ENCODE measurements at regions of chr19 and their contacts with region 1.

Region 1: GRCh38 chr19:46600384-46601317 is 479 bp upstream of the CALM3 start:
- DNase-seq: peak; percentile 96
- H3K4me3 ChIP-seq: peak overlapping the region; percentile 98 to 100
- H3K27ac ChIP-seq: peak overlapping the region; percentile 94 to 100
- H3K4me1 ChIP-seq: peaks cover 19 to 31% of the 10 kb centered on the region in 2 experiments
- H3K27me3 ChIP-seq: no peaks in the 10 kb centered on the region
- CTCF ChIP-seq: no peak
- EP300 ChIP-seq: peak in 1 of 2 experiments; percentile 65; a peak in 1 of 4 replicates
- RAD21 ChIP-seq: no peak

Region 2: DNA sequence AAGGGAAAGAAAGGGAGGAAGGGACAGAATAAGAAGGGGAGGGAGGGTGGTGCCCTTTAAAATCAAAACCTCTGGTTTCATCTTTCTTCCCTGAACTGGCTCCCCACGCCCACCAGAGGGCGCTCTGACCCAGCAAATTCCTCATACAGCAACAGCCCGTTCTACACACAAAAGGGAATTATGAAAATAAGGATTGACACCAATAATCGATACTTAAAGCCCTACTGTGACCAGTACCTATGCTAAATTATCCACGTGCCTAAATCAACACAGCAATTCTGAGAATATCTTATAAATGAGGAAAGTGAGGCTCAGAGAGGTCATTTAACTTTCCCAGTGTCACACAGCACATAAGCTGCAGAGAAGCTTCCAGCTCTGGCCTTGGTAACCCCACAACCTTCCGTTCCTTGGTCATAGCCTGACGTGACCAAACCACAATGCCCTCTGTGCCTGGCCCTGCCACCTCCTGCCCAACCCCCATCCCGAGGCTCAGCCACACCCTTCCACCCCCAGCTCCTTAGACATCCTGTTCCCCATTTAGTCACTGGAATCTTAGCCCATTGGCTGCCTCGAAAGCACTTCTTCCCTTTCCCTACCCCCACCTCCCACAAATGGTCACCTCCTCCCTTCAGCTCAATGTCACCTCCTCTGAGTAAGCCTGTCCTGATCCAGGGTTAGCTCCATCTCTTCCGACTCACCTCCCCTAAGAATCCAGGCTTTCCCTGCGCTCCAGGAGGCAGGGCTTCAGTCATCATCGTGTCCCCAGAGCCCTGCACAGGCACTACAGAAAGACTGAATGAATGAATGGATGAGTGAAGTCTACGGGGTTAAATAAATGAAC is 70.8 kb before region 1 on chr19:
- CTCF ChIA-PET with region 1: interaction called, 14 read pairs
- POLR2A ChIA-PET with region 1: interaction called, 3 read pairs
- DNase-seq: peak; percentile 81
- H3K4me3 ChIP-seq: peak overlapping the region in 1 of 2 experiments; percentile 35; a peak in 1 of 4 replicates
- H3K27ac ChIP-seq: no peak overlapping the region
- H3K4me1 ChIP-seq: peaks cover 0 to 28% of the 10 kb centered on the region in 2 experiments; a peak in 1 of 4 replicates
- H3K27me3 ChIP-seq: no peaks in the 10 kb centered on the region
- CTCF ChIP-seq: peak; percentile 88
- EP300 ChIP-seq: no peak
- RAD21 ChIP-seq: peak; percentile 95

Region 3: DNA sequence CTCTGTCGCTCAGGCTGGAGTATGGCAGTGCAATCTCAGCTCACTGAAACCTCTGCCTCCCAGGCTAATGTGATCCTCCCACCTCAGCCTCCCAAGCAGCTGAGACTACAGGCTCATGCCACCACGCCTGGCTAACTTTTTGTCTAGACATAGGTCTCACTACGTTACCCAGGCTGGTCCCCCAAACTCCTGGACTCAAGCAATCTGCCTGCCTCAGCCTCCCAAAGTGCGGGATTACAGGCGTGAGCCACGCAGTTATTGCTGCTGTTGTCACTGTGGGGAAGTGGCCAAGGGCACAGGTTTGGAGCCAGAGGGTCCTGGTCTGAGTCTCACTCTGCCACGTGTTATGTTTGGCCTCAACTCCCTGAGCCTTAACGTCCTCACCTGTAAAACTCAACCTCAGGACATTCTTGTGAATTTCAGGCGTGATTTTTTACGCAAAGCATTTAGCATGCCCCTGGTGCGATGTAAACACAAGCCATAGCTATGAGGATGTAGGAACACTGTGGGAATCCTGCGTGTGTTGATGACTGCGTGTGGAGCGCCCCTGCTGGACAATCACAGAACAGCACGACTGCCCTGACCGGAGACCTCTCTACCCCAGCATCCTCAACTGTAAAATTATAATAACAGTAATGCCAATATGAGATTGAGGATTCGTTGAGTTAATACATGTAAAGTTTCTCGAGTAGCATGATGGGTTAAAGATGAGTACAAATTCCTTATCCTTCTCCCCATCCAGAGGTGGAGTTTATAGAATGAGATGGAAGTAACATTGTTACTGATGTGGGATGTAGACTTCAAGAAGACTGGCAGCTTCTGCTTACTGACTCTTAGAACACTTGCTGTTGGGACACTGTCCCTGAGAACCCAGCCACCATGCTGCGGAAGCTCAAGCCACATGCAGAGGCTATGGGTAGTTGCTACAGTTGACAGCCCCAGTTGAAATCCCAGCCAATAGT is 63.2 kb before region 1 on chr19:
- CTCF ChIA-PET with region 1: interaction called, 16 read pairs
- POLR2A ChIA-PET with region 1: no interaction called
- DNase-seq: peak; percentile 70
- H3K4me3 ChIP-seq: peak overlapping the region in 1 of 2 experiments; percentile 11; a peak in 1 of 4 replicates
- H3K27ac ChIP-seq: no peak overlapping the region
- H3K4me1 ChIP-seq: peaks cover 0 to 9% of the 10 kb centered on the region in 2 experiments; a peak in 1 of 4 replicates
- H3K27me3 ChIP-seq: no peaks in the 10 kb centered on the region
- CTCF ChIP-seq: peak; percentile 89
- EP300 ChIP-seq: no peak
- RAD21 ChIP-seq: 0 out of 2 replicates have a peak, but pooled peaks have one; percentile 9

Region 4: DNA sequence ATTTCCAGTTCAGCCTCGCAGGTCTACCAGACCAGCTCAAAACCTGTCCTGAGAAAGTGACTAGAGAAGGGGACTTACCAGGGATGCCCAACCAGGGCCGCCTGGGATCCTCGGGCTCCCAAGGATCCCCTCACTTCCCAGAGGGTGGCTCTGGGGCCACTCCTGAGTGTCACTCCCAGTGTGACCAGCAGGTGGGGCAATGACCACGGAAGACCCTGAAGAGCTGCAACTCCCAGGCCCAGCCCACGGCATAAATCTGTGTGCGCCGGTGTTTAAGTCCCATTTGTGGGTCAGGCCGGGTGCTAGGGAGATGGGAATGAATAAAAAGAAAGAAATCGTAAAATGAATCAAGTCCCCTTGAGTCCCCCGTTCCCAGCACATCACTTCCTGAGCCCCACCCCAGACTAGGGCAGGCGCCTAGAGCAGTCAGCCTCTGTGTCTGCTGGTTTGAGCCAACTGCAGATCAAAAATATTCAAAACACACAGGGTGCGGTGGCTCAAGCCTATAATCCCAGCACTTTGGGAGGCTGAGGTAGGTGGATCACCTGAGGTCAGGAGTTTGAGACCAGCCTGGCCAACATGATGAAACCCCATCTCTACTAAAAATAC is 13.6 kb after region 1 on chr19:
- CTCF ChIA-PET with region 1: interaction called, 119 read pairs
- POLR2A ChIA-PET with region 1: interaction called, 7 read pairs
- DNase-seq: peak; percentile 91
- H3K4me3 ChIP-seq: peak overlapping the region in 1 of 2 experiments; percentile 8; a peak in 1 of 4 replicates
- H3K27ac ChIP-seq: peak overlapping the region in 1 of 2 experiments; percentile 31; a peak in 1 of 4 replicates
- H3K4me1 ChIP-seq: peaks cover 0 to 28% of the 10 kb centered on the region in 2 experiments; a peak in 2 of 4 replicates
- H3K27me3 ChIP-seq: no peaks in the 10 kb centered on the region
- CTCF ChIP-seq: peak; percentile 84
- EP300 ChIP-seq: no peak
- RAD21 ChIP-seq: peak; percentile 92

Region 5: GRCh38 chr19:46624958-46625661 is 24.5 kb after region 1 on chr19 and contains the start of gene PTGIR:
- CTCF ChIA-PET with region 1: interaction called, 8 read pairs
- POLR2A ChIA-PET with region 1: interaction called, 11 read pairs
- DNase-seq: peak; percentile 43
- H3K4me3 ChIP-seq: peak within 1 kb of the TSS in 1 of 2 experiments; percentile 52; a peak in 1 of 4 replicates
- H3K27ac ChIP-seq: peak within 1 kb of the TSS; percentile 75 to 97
- H3K4me1 ChIP-seq: peaks cover 16 to 71% of the 10 kb centered on the region in 2 experiments
- H3K27me3 ChIP-seq: no peaks in the 10 kb centered on the region
- CTCF ChIP-seq: no peak
- EP300 ChIP-seq: no peak
- RAD21 ChIP-seq: no peak
- polyA plus RNA-seq, gene PTGIR: 2.5 and 3.3 TPM in 2 replicates

Region 6: GRCh38 chr19:46634045-46634655 is 33.5 kb after region 1 on chr19:
- CTCF ChIA-PET with region 1: no interaction called
- POLR2A ChIA-PET with region 1: interaction called, 10 read pairs
- DNase-seq: peak; percentile 90
- H3K4me3 ChIP-seq: peak overlapping the region in 1 of 2 experiments; percentile 48; a peak in 2 of 4 replicates
- H3K27ac ChIP-seq: peak overlapping the region in 1 of 2 experiments; percentile 92; a peak in 2 of 4 replicates
- H3K4me1 ChIP-seq: peaks cover 16 to 56% of the 10 kb centered on the region in 2 experiments
- H3K27me3 ChIP-seq: no peaks in the 10 kb centered on the region
- CTCF ChIP-seq: no peak
- EP300 ChIP-seq: no peak
- RAD21 ChIP-seq: no peak